B cell (primary cell): ENCODE measurements at regions of chr22 and their contacts with region 1.

Region 1: DNA sequence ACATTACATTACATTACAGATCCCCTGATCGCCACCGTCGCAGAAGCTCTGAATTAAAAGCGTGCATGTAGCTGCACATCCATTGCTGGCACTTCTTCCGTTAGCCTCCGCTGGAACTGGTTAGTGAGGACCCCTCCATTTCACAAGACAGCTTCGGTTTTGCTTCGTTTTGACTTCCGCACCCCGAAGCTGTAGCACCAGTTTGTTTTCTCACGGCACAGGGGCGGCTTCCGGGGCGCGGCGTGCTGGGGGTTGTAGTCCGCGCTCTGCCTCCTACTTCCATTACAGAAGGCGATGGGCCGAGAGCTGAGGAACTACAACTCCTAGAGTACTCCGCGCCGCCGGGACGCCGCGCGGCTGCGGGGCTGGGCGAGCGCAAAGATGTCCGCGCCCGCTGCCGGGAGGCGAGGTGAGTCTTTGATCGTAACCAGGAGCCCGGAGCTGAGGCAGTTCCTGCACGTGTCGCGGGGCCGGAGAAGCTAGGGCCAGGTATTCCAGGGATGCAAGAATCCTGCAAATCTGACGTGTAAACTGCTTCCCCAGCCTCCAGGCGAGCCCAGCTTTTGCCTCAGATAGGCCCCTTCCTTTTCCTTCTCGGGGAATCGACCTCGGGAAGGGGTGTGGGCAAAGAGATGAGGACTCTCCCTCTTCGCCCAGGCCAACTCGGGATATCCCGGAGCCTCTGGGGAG is at the start of gene PEX26:
- DNase-seq: peak; percentile 97
- ATAC-seq: peak; percentile 99
- H3K4me3 ChIP-seq: peak within 1 kb of the TSS; percentile 70 to 97 (median 92)
- H3K4me3 Mint-ChIP-seq: peak within 1 kb of the TSS; percentile 97
- H3K27ac ChIP-seq: peak within 1 kb of the TSS; percentile 75 to 89
- H3K27ac Mint-ChIP-seq: peak within 1 kb of the TSS; percentile 96
- H3K4me1 ChIP-seq: peaks cover 31 to 32% of the 10 kb centered on the region in 2 donors
- H3K4me1 Mint-ChIP-seq: peaks cover 44% of the 10 kb centered on the region
- H3K27me3 ChIP-seq: no peaks in the 10 kb centered on the region
- H3K27me3 Mint-ChIP-seq: no peaks in the 10 kb centered on the region
- CTCF ChIP-seq: no peak
- total RNA-seq, gene PEX26: 33.4 and 35.4 TPM in 2 replicates

Region 2: GRCh38 chr22:17638432-17639246 is 439.1 kb before region 1 on chr22 and contains the start of gene BCL2L13:
- CTCF ChIA-PET with region 1: interaction called, 4 read pairs
- POLR2A ChIA-PET with region 1: interaction called, 4 read pairs
- intact Hi-C with region 1: loop called (anchors 1 kb)
- DNase-seq: peak; percentile 94
- ATAC-seq: peak; percentile 94
- H3K4me3 ChIP-seq: peak within 1 kb of the TSS; percentile 67 to 100 (median 81)
- H3K4me3 Mint-ChIP-seq: peak within 1 kb of the TSS; percentile 96
- H3K27ac ChIP-seq: peak within 1 kb of the TSS; percentile 100
- H3K27ac Mint-ChIP-seq: peak within 1 kb of the TSS; percentile 97
- H3K4me1 ChIP-seq: peaks cover 15 to 20% of the 10 kb centered on the region in 2 donors
- H3K4me1 Mint-ChIP-seq: peaks cover 28% of the 10 kb centered on the region
- H3K27me3 ChIP-seq: no peaks in the 10 kb centered on the region
- H3K27me3 Mint-ChIP-seq: no peaks in the 10 kb centered on the region
- CTCF ChIP-seq: no peak
- total RNA-seq, gene BCL2L13: 29.9 and 37.2 TPM in 2 replicates

Region 3: GRCh38 chr22:17830043-17830961 is 247.5 kb before region 1 on chr22:
- CTCF ChIA-PET with region 1: interaction called, 250 read pairs
- POLR2A ChIA-PET with region 1: interaction called, 5 read pairs
- intact Hi-C with region 1: loop called (anchors 1 kb)
- DNase-seq: peak; percentile 84
- ATAC-seq: peak; percentile 94
- H3K4me3 ChIP-seq: no peak overlapping the region
- H3K4me3 Mint-ChIP-seq: no peak overlapping the region
- H3K27ac ChIP-seq: peak overlapping the region in 1 of 2 donors; percentile 3
- H3K27ac Mint-ChIP-seq: peak overlapping the region; percentile 61
- H3K4me1 ChIP-seq: peaks cover 0 to 7% of the 10 kb centered on the region in 2 donors
- H3K4me1 Mint-ChIP-seq: peaks cover 6% of the 10 kb centered on the region
- H3K27me3 ChIP-seq: no peaks in the 10 kb centered on the region
- H3K27me3 Mint-ChIP-seq: no peaks in the 10 kb centered on the region
- CTCF ChIP-seq: peak; percentile 99

Region 4: GRCh38 chr22:17910561-17911311 is 167.0 kb before region 1 on chr22:
- CTCF ChIA-PET with region 1: interaction called, 17 read pairs
- POLR2A ChIA-PET with region 1: no interaction called
- intact Hi-C with region 1: no loop called
- DNase-seq: no peak
- ATAC-seq: no peak
- H3K4me3 ChIP-seq: no peak overlapping the region
- H3K4me3 Mint-ChIP-seq: no peak overlapping the region
- H3K27ac ChIP-seq: peak overlapping the region in 1 of 2 donors; percentile 37
- H3K27ac Mint-ChIP-seq: peak overlapping the region; percentile 11
- H3K4me1 ChIP-seq: peaks cover 0 to 25% of the 10 kb centered on the region in 2 donors
- H3K4me1 Mint-ChIP-seq: peaks cover 72% of the 10 kb centered on the region
- H3K27me3 ChIP-seq: no peaks in the 10 kb centered on the region
- H3K27me3 Mint-ChIP-seq: no peaks in the 10 kb centered on the region
- CTCF ChIP-seq: no peak

Region 5: DNA sequence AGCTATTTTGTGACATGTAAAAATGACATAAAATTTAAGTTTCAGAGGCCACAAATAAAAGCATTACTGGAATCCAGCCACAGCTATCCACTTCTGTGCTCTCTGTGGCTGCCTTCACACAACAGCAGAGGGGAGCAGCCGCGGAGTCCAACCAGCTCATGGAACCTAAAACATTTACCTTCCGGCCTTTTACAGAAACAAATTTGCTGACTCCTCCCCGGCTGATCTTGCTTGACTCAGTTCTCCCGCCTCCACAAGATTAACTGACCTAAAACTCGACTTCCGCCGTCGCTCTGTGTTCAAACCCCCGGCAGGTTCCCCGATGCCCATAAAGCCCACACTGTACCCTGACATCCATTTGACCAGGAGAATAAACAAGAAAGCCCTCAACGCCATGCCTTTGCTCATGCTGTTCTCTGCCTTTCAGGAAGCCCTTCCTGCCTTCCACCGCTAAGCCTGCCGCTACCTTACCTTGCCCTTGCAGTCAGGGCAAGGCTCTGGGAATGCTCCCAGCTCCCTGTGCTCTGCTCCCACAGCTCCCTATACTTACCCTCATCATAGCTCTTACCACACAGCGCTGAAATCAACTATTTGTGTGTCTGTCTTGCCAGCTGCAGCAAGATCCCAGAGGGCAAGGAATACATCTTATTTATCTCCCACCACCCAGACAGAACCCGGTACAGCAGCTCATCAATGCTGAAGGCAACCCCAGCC is 88.8 kb before region 1 on chr22:
- CTCF ChIA-PET with region 1: interaction called, 133 read pairs
- POLR2A ChIA-PET with region 1: interaction called, 26 read pairs
- intact Hi-C with region 1: loop called (anchors 5 kb)
- DNase-seq: no peak
- ATAC-seq: no peak
- H3K4me3 ChIP-seq: no peak overlapping the region
- H3K4me3 Mint-ChIP-seq: peak overlapping the region; percentile 5
- H3K27ac ChIP-seq: peak overlapping the region in 1 of 2 donors; percentile 69
- H3K27ac Mint-ChIP-seq: peak overlapping the region; percentile 83
- H3K4me1 ChIP-seq: peaks cover 80 to 93% of the 10 kb centered on the region in 2 donors
- H3K4me1 Mint-ChIP-seq: peaks cover 94% of the 10 kb centered on the region
- H3K27me3 ChIP-seq: no peaks in the 10 kb centered on the region
- H3K27me3 Mint-ChIP-seq: no peaks in the 10 kb centered on the region
- CTCF ChIP-seq: no peak

Region 6: DNA sequence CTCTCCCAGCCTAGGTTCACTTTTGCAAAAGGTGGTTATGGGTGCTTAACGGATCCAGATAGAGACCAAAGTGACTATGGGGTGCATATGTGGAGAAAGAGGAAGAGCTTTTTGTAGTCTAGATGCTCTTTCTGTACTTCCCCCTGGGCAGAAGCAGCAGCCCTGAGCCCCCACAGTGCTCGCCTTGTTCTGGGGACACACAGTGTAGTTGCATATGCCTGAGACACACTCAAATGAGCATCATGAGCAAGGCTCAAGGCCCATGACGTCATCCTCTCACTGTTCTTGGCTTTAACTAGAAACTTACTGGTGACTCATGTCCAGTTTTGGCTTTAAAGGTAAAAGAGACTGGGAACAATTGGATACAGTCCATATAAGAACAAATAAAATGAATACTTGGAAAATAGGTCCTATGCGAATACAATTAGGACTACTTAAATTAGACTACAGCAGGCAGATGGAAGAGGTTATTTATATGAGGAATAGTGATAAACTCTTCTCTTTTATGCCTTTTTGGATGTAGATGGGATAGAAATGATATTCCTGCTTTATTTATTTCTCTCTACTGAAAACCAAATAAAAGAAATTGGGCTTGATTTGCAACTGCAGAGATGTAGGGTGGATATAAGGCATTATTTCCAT is 20.1 kb before region 1 on chr22:
- CTCF ChIA-PET with region 1: interaction called, 82 read pairs
- POLR2A ChIA-PET with region 1: interaction called, 28 read pairs
- intact Hi-C with region 1: loop called (anchors 1 kb)
- DNase-seq: peak; percentile 93
- ATAC-seq: peak; percentile 81
- H3K4me3 ChIP-seq: peak overlapping the region in 4 of 5 experiments; percentile 27 to 47 (median 38)
- H3K4me3 Mint-ChIP-seq: peak overlapping the region; percentile 86
- H3K27ac ChIP-seq: peak overlapping the region; percentile 97 to 99
- H3K27ac Mint-ChIP-seq: peak overlapping the region; percentile 99
- H3K4me1 ChIP-seq: peaks cover 30 to 43% of the 10 kb centered on the region in 2 donors
- H3K4me1 Mint-ChIP-seq: peaks cover 41% of the 10 kb centered on the region
- H3K27me3 ChIP-seq: no peaks in the 10 kb centered on the region
- H3K27me3 Mint-ChIP-seq: no peaks in the 10 kb centered on the region
- CTCF ChIP-seq: no peak